ENCODE measurements at regions of chr1 and their contacts with region 1.

Region 1: GRCh38 chr1:31394628-31395193 is 18.3 kb upstream of the SERINC2 start:
- H3K4me3 ChIP-seq: peak overlapping the region; percentile 27
- H3K27ac ChIP-seq: no peak overlapping the region
- H3K4me1 ChIP-seq: no peaks in the 10 kb centered on the region
- CTCF ChIP-seq: peak; percentile 93

Region 2: DNA sequence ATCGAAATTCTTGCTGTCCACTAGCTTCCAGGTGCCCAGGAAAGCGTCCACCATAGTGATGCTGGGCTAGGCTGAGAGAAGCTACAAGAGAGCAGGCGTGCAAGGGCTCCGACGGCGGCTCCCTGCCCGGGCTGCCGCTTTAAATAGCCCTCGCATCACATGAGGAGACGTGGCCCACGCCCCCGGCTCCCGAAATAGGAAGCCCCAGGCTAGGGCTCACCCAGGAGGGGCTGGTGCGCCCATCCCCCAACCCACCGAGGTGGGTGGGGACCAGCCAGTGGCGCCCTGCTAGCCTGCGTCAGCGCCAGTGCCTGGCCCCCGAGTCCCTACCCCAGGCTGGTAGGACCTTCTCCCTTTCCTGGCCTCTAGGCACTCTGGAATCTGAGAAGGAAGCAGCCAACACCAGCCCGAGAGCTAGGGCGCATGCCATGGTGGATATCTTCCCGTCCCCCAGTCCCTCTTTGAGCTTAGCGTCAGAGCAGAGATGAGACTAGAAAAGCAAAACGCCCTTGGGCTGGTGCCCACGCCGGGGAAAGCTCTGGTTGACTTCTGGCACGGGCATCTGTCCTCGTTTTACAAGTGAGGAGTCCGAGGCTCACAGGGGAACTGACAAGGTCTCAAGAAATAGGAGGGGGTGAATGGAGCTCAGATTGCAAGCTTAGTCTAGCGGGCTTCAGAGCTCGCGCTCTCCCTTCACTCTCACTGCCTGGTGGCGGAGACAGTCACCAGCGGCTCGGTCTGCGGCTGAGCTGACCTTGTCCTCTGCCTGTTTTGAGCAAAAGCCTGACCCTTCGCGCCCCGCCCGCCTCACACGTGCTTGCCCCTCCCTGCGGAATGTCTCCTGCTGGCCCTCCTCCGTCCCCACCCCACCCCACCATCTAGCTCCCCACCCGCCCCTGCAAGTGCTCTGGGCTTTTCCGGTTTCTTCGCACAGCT is 21.5 kb before region 1 on chr1 and contains the start of gene FABP3:
- CTCF ChIA-PET with region 1: interaction called, 16 read pairs
- POLR2A ChIA-PET with region 1: interaction called, 3 read pairs
- H3K4me3 ChIP-seq: peak within 1 kb of the TSS; percentile 25
- H3K27ac ChIP-seq: peak within 1 kb of the TSS; percentile 38; the same call in 1 of the 2 replicates
- H3K4me1 ChIP-seq: no peaks in the 10 kb centered on the region
- CTCF ChIP-seq: no peak

Region 3: GRCh38 chr1:31383967-31384366 is 10.7 kb before region 1 on chr1:
- CTCF ChIA-PET with region 1: interaction called, 14 read pairs
- POLR2A ChIA-PET with region 1: interaction called, 4 read pairs
- H3K4me3 ChIP-seq: no peak overlapping the region
- H3K27ac ChIP-seq: no peak overlapping the region
- H3K4me1 ChIP-seq: no peaks in the 10 kb centered on the region
- CTCF ChIP-seq: no peak

Region 4: GRCh38 chr1:31413405-31414125 is 18.9 kb after region 1 on chr1:
- CTCF ChIA-PET with region 1: interaction called, 146 read pairs
- POLR2A ChIA-PET with region 1: no interaction called
- H3K4me3 ChIP-seq: peak overlapping the region; percentile 64
- H3K27ac ChIP-seq: peak overlapping the region; percentile 34; the same call in 1 of the 2 replicates
- H3K4me1 ChIP-seq: no peaks in the 10 kb centered on the region; the same call in 1 of the 2 replicates
- CTCF ChIP-seq: no peak; the same call in 1 of the 2 replicates

Region 5: GRCh38 chr1:31422505-31423319 is 28.0 kb after region 1 on chr1:
- CTCF ChIA-PET with region 1: interaction called, 146 read pairs
- POLR2A ChIA-PET with region 1: interaction called, 3 read pairs
- H3K4me3 ChIP-seq: no peak overlapping the region
- H3K27ac ChIP-seq: no peak overlapping the region
- H3K4me1 ChIP-seq: no peaks in the 10 kb centered on the region
- CTCF ChIP-seq: peak; percentile 84